PC-9 (cell line): ENCODE measurements at regions of chr1 and their contacts with region 1.

Region 1: GRCh38 chr1:55140546-55140983 is 74.6 kb downstream of the USP24 start:
- DNase-seq: peak; percentile 43 to 65
- H3K4me3 ChIP-seq: no peak overlapping the region
- H3K27ac ChIP-seq: no peak overlapping the region
- H3K4me1 ChIP-seq: no peaks in the 10 kb centered on the region
- H3K27me3 ChIP-seq: no peaks in the 10 kb centered on the region
- CTCF ChIP-seq: peak; percentile 80

Region 2: GRCh38 chr1:55071477-55071876 is 69.1 kb before region 1 on chr1:
- CTCF ChIA-PET with region 1: no interaction called
- POLR2A ChIA-PET with region 1: interaction called, 37 read pairs
- intact Hi-C with region 1: no loop called
- DNase-seq: peak in 1 of 2 experiments; percentile 52
- H3K4me3 ChIP-seq: no peak overlapping the region
- H3K27ac ChIP-seq: no peak overlapping the region
- H3K4me1 ChIP-seq: no peaks in the 10 kb centered on the region
- H3K27me3 ChIP-seq: no peaks in the 10 kb centered on the region
- CTCF ChIP-seq: peak; percentile 60; the same call in 1 of the 2 replicates

Region 3: DNA sequence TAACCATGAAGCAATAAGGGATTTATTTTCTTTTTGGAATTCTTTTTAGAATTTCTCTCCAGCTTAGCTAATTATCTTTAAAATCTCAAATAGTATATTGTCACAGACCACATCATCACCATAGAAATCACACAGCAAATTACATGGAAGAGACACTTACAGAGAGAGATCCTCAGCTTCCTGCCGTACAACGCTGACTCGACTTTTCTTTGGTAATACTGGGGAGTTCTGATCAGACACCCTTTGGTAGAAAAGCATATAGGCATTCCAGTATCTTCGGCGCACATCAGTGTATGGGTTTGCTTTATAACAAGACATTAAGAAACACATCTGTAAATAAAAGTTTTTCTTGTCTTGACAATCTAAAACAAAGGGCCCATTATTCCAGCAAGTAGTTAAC is 45.5 kb before region 1 on chr1:
- CTCF ChIA-PET with region 1: no interaction called
- POLR2A ChIA-PET with region 1: no interaction called
- intact Hi-C with region 1: loop called (anchors 5 kb)
- DNase-seq: no peak
- H3K4me3 ChIP-seq: no peak overlapping the region
- H3K27ac ChIP-seq: no peak overlapping the region
- H3K4me1 ChIP-seq: no peaks in the 10 kb centered on the region
- H3K27me3 ChIP-seq: no peaks in the 10 kb centered on the region
- CTCF ChIP-seq: no peak

Region 4: GRCh38 chr1:55215256-55216021 is 74.9 kb after region 1 on chr1 and contains the start of gene USP24:
- CTCF ChIA-PET with region 1: no interaction called
- POLR2A ChIA-PET with region 1: no interaction called
- intact Hi-C with region 1: loop called (anchors 5 kb)
- DNase-seq: peak; percentile 71 to 87
- H3K4me3 ChIP-seq: peak within 1 kb of the TSS; percentile 92
- H3K27ac ChIP-seq: peak within 1 kb of the TSS; percentile 87
- H3K4me1 ChIP-seq: peaks cover 58% of the 10 kb centered on the region
- H3K27me3 ChIP-seq: no peaks in the 10 kb centered on the region
- CTCF ChIP-seq: no peak
- total RNA-seq, gene USP24: 56.3 and 61.0 TPM in 2 replicates

Region 5: GRCh38 chr1:55277377-55278130 is 137.0 kb after region 1 on chr1:
- CTCF ChIA-PET with region 1: interaction called, 8 read pairs
- POLR2A ChIA-PET with region 1: interaction called, 3 read pairs
- intact Hi-C with region 1: loop called (anchors 1 kb)
- DNase-seq: peak; percentile 60 to 71
- H3K4me3 ChIP-seq: no peak overlapping the region
- H3K27ac ChIP-seq: no peak overlapping the region
- H3K4me1 ChIP-seq: peaks cover 12% of the 10 kb centered on the region
- H3K27me3 ChIP-seq: no peaks in the 10 kb centered on the region
- CTCF ChIP-seq: peak; percentile 91

Region 6: DNA sequence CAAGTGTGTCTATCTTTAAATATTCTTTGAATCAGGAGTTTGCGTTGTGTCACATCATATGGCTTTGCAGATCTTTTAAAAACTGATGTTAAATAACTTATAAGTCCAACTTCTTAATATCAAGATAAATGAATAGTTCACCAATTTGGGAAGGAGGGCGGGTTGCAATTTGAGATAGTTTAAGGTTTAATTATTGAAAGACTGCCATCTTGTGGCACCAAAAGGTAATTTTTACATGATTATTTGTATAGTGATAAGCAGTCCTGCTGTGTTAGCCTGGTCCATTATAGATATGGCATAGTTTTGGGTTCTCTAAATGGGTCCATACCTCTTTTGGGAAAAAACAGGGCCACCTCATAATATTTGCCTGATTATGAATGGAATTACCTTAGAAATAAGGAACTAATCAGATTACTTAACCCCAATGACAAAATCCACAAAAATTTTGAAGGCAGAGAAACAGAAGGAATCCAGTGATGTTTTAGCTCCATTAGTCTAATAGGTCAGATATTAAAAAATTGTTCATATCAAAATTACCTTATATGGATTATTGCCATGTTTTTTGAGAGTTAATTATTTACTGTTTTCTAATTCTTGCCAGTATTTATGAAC is 1568.8 kb after region 1 on chr1:
- CTCF ChIA-PET with region 1: no interaction called
- POLR2A ChIA-PET with region 1: interaction called, 8 read pairs
- intact Hi-C with region 1: loop called (anchors 5 kb)
- DNase-seq: peak in 1 of 2 experiments; percentile 49
- H3K4me3 ChIP-seq: no peak overlapping the region
- H3K27ac ChIP-seq: no peak overlapping the region
- H3K4me1 ChIP-seq: peaks cover 17% of the 10 kb centered on the region
- H3K27me3 ChIP-seq: no peaks in the 10 kb centered on the region
- CTCF ChIP-seq: peak; percentile 80